T-cell (primary cell): ENCODE measurements at regions of chr19 and their contacts with region 1.

Region 1: DNA sequence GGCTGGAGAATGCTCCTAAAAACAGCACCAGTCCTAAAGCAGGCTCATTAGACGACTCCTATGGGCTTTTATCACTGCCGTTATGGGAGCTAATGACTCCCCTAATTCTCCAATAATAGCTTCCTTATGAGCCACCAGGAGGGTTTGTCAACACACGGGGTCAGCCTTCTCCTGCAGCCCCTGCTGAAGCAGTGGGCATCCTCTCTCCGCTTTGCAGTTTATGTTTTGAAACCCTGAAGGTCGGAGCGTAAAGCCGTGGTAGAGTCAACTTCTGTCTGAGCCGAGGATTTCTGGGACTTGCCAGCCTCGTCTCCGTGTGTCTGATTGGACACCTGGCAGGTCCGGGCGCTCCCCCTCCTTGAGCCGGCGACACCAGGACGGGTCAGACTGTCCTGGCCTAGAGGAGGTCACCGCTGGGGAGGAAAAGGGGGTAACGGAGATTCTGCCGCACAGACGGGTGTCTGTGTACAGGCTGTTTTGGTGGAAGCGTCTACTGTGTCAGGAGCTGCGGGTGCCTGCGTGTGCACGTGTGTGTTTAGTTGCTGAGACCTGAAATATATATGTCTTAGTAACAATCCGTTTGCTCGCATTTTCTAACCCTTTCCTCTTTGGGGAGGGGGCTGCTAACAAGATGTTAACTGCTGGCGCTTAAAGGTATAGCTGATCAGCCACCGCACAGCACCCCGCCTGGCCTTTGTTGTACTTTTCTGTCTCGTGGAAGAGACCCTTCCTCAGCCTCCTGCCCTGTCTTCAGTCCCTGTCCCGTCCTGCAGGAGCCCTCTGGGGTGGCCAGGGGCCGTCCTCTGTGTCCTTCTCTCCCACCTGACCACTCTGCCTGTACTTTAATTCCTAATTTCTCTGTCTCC is 1.9 kb downstream of the KDM4B start:
- DNase-seq: peak in 3 of 35 experiments; percentile 5 to 33 (median 14)
- ATAC-seq: no peak
- H3K4me3 ChIP-seq: peak overlapping the region; percentile 56 to 83
- H3K4me3 Mint-ChIP-seq: peak overlapping the region; percentile 85 to 96 (median 87)
- H3K27ac ChIP-seq: no peak overlapping the region
- H3K27ac Mint-ChIP-seq: peak overlapping the region; percentile 69 to 79
- H3K4me1 ChIP-seq: peaks cover 10 to 44% of the 10 kb centered on the region in 2 experiments
- H3K4me1 Mint-ChIP-seq: peaks cover 39 to 42% (median 40%) of the 10 kb centered on the region in 3 donors
- H3K27me3 ChIP-seq: no peaks in the 10 kb centered on the region
- H3K27me3 Mint-ChIP-seq: no peaks in the 10 kb centered on the region

Region 2: GRCh38 chr19:4889034-4889815 is 81.6 kb before region 1 on chr19:
- CTCF ChIA-PET with region 1: no interaction called
- POLR2A ChIA-PET with region 1: no interaction called
- DNase-seq: no peak
- ATAC-seq: no peak
- H3K4me3 ChIP-seq: no peak overlapping the region
- H3K4me3 Mint-ChIP-seq: no peak overlapping the region
- H3K27ac ChIP-seq: no peak overlapping the region
- H3K27ac Mint-ChIP-seq: no peak overlapping the region
- H3K4me1 ChIP-seq: no peaks in the 10 kb centered on the region
- H3K4me1 Mint-ChIP-seq: no peaks in the 10 kb centered on the region
- H3K27me3 ChIP-seq: no peaks in the 10 kb centered on the region
- H3K27me3 Mint-ChIP-seq: no peaks in the 10 kb centered on the region

Region 3: GRCh38 chr19:5006201-5006600 is 35.4 kb after region 1 on chr19:
- CTCF ChIA-PET with region 1: no interaction called
- POLR2A ChIA-PET with region 1: interaction called in 1 of 2 experiments, 10 read pairs
- DNase-seq: no peak
- ATAC-seq: no peak
- H3K4me3 ChIP-seq: no peak overlapping the region
- H3K4me3 Mint-ChIP-seq: no peak overlapping the region
- H3K27ac ChIP-seq: no peak overlapping the region
- H3K27ac Mint-ChIP-seq: no peak overlapping the region
- H3K4me1 ChIP-seq: peaks cover 0 to 3% of the 10 kb centered on the region in 2 experiments
- H3K4me1 Mint-ChIP-seq: peaks cover 11 to 23% (median 18%) of the 10 kb centered on the region in 3 donors
- H3K27me3 ChIP-seq: no peaks in the 10 kb centered on the region
- H3K27me3 Mint-ChIP-seq: no peaks in the 10 kb centered on the region

Region 4: DNA sequence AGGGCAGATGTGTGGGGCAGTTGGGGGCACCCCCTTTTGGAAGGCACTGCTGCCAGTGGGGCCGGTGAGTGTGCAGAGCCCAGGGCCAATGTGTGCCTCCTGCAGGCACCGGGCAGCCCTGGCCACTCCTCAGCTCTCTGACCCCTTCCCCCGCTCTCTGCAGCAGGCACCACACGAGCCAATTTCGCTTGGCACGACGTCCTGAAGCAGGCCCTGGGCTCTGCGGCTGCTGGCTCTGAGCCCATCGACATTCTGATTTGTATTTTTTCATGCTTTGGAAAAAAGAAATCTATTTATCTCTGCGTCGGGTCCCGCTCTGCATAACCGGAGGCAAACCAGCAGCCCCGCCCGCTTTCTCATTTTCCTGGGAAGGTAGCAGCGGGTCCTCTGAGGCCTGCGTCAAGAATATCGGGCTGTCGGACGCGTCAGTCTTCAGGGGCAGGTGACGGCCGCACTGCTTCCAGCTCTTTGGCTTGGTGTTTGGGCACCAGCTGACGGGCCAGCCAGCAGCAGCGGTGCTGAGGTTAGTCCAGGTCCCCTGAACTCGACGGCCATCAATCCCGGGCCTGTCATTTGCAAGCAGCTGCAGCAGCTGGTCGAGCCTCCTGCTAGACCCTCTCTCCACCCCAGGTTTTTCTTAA is 132.4 kb after region 1 on chr19:
- CTCF ChIA-PET with region 1: no interaction called
- POLR2A ChIA-PET with region 1: no interaction called
- DNase-seq: no peak
- ATAC-seq: no peak
- H3K4me3 ChIP-seq: no peak overlapping the region
- H3K4me3 Mint-ChIP-seq: no peak overlapping the region
- H3K27ac ChIP-seq: no peak overlapping the region
- H3K27ac Mint-ChIP-seq: no peak overlapping the region
- H3K4me1 ChIP-seq: no peaks in the 10 kb centered on the region
- H3K4me1 Mint-ChIP-seq: no peaks in the 10 kb centered on the region
- H3K27me3 ChIP-seq: no peaks in the 10 kb centered on the region
- H3K27me3 Mint-ChIP-seq: no peaks in the 10 kb centered on the region